CD14-positive monocyte (primary cell): ENCODE measurements at regions of chr19 and their contacts with region 1.

Region 1: GRCh38 chr19:52823676-52824075 is 2.2 kb upstream of the ZNF28 start:
- DNase-seq: no peak
- H3K4me3 ChIP-seq: no peak overlapping the region
- H3K4me3 Mint-ChIP-seq: no peak overlapping the region
- H3K27ac ChIP-seq: no peak overlapping the region
- H3K27ac Mint-ChIP-seq: no peak overlapping the region
- H3K4me1 ChIP-seq: peaks cover 7 to 9% of the 10 kb centered on the region in 2 donors
- H3K4me1 Mint-ChIP-seq: peaks cover 8% of the 10 kb centered on the region
- H3K27me3 ChIP-seq: no peaks in the 10 kb centered on the region
- H3K27me3 Mint-ChIP-seq: peaks cover 2 to 3% (median 2%) of the 10 kb centered on the region in 3 donors
- CTCF ChIP-seq: no peak

Region 2: GRCh38 chr19:52853880-52854279 is 30.2 kb after region 1 on chr19:
- intact Hi-C with region 1: loop called (anchors 1 to 5 kb)
- DNase-seq: no peak
- H3K4me3 ChIP-seq: no peak overlapping the region
- H3K4me3 Mint-ChIP-seq: peak overlapping the region in 1 of 2 donors; percentile 45
- H3K27ac ChIP-seq: no peak overlapping the region
- H3K27ac Mint-ChIP-seq: peak overlapping the region in 1 of 7 donors; percentile 46
- H3K4me1 ChIP-seq: peaks cover 6 to 9% of the 10 kb centered on the region in 2 donors
- H3K4me1 Mint-ChIP-seq: peaks cover 21% of the 10 kb centered on the region
- H3K27me3 ChIP-seq: no peaks in the 10 kb centered on the region
- H3K27me3 Mint-ChIP-seq: peaks cover 0 to 2% (median 2%) of the 10 kb centered on the region in 3 donors
- CTCF ChIP-seq: no peak

Region 3: DNA sequence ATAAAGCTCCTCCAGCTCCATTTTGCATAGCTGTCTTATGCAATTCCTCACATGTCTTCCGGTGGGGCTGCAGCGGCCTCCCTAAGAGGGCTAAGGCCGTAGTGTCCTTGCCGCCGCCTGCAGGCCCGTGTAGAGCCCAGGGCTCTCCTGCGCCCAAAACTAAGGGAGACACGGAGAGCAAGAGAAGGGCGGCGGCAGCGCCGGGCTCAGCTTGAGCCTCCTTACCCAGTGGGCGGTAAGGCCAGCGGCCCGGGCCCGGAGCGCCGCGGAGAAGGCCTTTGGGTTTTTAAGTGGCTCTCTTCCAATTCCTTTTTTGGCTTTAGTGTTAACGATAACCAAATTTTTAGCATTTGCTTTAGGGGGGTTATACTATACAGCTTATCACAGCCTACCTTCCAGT is 400.9 kb after region 1 on chr19:
- intact Hi-C with region 1: no loop called
- DNase-seq: no peak
- H3K4me3 ChIP-seq: no peak overlapping the region
- H3K4me3 Mint-ChIP-seq: no peak overlapping the region
- H3K27ac ChIP-seq: no peak overlapping the region
- H3K27ac Mint-ChIP-seq: no peak overlapping the region
- H3K4me1 ChIP-seq: no peaks in the 10 kb centered on the region
- H3K4me1 Mint-ChIP-seq: no peaks in the 10 kb centered on the region
- H3K27me3 ChIP-seq: no peaks in the 10 kb centered on the region
- H3K27me3 Mint-ChIP-seq: peaks cover 0 to 2% (median 0%) of the 10 kb centered on the region in 3 donors
- CTCF ChIP-seq: no peak